Activated CD8-positive, alpha-beta T cell treated with anti-CD3 and anti-CD28 coated beads, Interleukin-2, amount 10 ng/mL, durations not matched to agents 7 days and 5 days (primary cell): ENCODE measurements at regions of chr6 and their contacts with region 1.

Region 1: GRCh38 chr6:116287689-116288282 is 8.1 kb upstream of the TSPYL1 start:
- DNase-seq: no peak
- ATAC-seq: peak; percentile 36
- H3K4me3 Mint-ChIP-seq: no peak overlapping the region
- H3K27ac Mint-ChIP-seq: no peak overlapping the region
- H3K4me1 Mint-ChIP-seq: no peaks in the 10 kb centered on the region
- H3K27me3 Mint-ChIP-seq: no peaks in the 10 kb centered on the region

Region 2: GRCh38 chr6:116268589-116269293 is 19.0 kb before region 1 on chr6:
- CTCF ChIA-PET with region 1: interaction called, 14 read pairs
- POLR2A ChIA-PET with region 1: no interaction called
- DNase-seq: no peak
- ATAC-seq: peak; percentile 66
- H3K4me3 Mint-ChIP-seq: no peak overlapping the region
- H3K27ac Mint-ChIP-seq: no peak overlapping the region
- H3K4me1 Mint-ChIP-seq: peaks cover 3% of the 10 kb centered on the region
- H3K27me3 Mint-ChIP-seq: no peaks in the 10 kb centered on the region

Region 3: GRCh38 chr6:116444092-116444491 is 156.3 kb after region 1 on chr6:
- CTCF ChIA-PET with region 1: interaction called, 10 read pairs
- POLR2A ChIA-PET with region 1: no interaction called
- DNase-seq: no peak
- ATAC-seq: peak; percentile 73
- H3K4me3 Mint-ChIP-seq: no peak overlapping the region
- H3K27ac Mint-ChIP-seq: no peak overlapping the region
- H3K4me1 Mint-ChIP-seq: peaks cover 24% of the 10 kb centered on the region
- H3K27me3 Mint-ChIP-seq: peaks cover 34% of the 10 kb centered on the region

Region 4: GRCh38 chr6:116531675-116532570 is 244.1 kb after region 1 on chr6:
- CTCF ChIA-PET with region 1: interaction called, 39 read pairs
- POLR2A ChIA-PET with region 1: no interaction called
- DNase-seq: peak; percentile 78
- ATAC-seq: peak; percentile 93
- H3K4me3 Mint-ChIP-seq: no peak overlapping the region
- H3K27ac Mint-ChIP-seq: no peak overlapping the region
- H3K4me1 Mint-ChIP-seq: no peaks in the 10 kb centered on the region
- H3K27me3 Mint-ChIP-seq: peaks cover 38% of the 10 kb centered on the region

Region 5: DNA sequence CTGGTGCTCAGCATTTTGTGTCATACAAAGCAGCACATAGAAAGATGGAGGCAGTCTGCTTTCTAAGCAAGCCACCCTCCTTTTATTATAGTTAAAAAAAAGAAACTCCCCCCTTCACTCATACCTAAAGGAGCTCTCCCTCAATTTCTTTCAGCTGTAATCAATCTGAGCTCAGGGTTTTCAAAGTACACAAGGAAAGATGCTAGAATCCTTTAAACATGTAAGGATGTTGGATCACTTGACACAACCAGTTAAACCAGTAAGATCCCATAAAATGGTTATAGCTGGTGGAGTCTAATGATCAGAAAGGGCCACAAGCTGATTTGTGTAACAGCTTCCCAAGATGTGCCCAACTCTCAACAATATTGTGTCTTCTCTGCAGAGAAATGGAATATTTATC is 265.7 kb after region 1 on chr6 and contains the start of gene CALHM4:
- CTCF ChIA-PET with region 1: interaction called, 10 read pairs
- POLR2A ChIA-PET with region 1: no interaction called
- DNase-seq: no peak
- ATAC-seq: no peak
- H3K4me3 Mint-ChIP-seq: no peak within 1 kb of the TSS
- H3K27ac Mint-ChIP-seq: no peak within 1 kb of the TSS
- H3K4me1 Mint-ChIP-seq: no peaks in the 10 kb centered on the region
- H3K27me3 Mint-ChIP-seq: peaks cover 21% of the 10 kb centered on the region
- total RNA-seq, gene CALHM4: not detected